AG04449 (cell line): ENCODE measurements at regions of chr16 and their contacts with region 1.

Region 1: GRCh38 chr16:13919683-13920509 is at the start of gene ERCC4:
- DNase-seq: peak; percentile 94
- H3K4me3 ChIP-seq: peak within 1 kb of the TSS; percentile 99
- CTCF ChIP-seq: peak; percentile 87

Region 2: GRCh38 chr16:13909872-13910303 is 10.0 kb before region 1 on chr16:
- CTCF ChIA-PET with region 1: interaction called, 72 read pairs
- POLR2A ChIA-PET with region 1: no interaction called
- DNase-seq: peak; percentile 21
- H3K4me3 ChIP-seq: no peak overlapping the region
- CTCF ChIP-seq: no peak

Region 3: GRCh38 chr16:13951611-13952010 is 31.7 kb after region 1 on chr16:
- CTCF ChIA-PET with region 1: interaction called, 12 read pairs
- POLR2A ChIA-PET with region 1: no interaction called
- DNase-seq: no peak
- H3K4me3 ChIP-seq: no peak overlapping the region
- CTCF ChIP-seq: no peak

Region 4: DNA sequence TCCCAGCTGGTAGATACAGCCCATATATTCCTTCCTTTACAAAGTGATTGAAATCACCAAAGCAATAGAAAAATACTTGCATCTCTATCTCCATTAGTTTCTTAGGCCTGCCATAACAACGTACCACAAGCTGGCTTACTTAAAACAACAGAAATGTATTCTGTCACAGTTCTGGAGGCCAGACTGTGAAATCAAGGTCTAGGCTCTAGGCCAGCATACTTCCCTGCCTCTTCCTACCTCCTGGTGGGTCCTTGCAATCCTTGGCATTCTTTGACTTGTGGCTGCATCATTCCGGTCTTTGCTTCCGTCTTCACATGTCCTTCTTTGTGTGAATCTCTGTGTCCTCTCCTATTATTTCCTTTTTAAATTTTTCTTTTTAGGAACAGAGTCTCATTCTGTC is 62.6 kb after region 1 on chr16:
- CTCF ChIA-PET with region 1: no interaction called
- POLR2A ChIA-PET with region 1: no interaction called
- DNase-seq: no peak
- H3K4me3 ChIP-seq: no peak overlapping the region
- CTCF ChIP-seq: no peak

Region 5: GRCh38 chr16:14232106-14232864 is 312.4 kb after region 1 on chr16:
- CTCF ChIA-PET with region 1: interaction called, 11 read pairs
- POLR2A ChIA-PET with region 1: no interaction called
- DNase-seq: no peak
- H3K4me3 ChIP-seq: no peak overlapping the region
- CTCF ChIP-seq: no peak

Region 6: GRCh38 chr16:14278749-14279148 is 358.9 kb after region 1 on chr16:
- CTCF ChIA-PET with region 1: interaction called, 25 read pairs
- POLR2A ChIA-PET with region 1: no interaction called
- DNase-seq: no peak
- H3K4me3 ChIP-seq: no peak overlapping the region
- CTCF ChIP-seq: no peak